ENCODE measurements at regions of chr1 and their contacts with region 1.

Region 1: GRCh38 chr1:46547481-46548383 is 3.7 kb downstream of the KNCN start:
- DNase-seq: no peak

Region 2: GRCh38 chr1:45569962-45570581 is 977.7 kb before region 1 on chr1:
- intact Hi-C with region 1: no loop called
- DNase-seq: peak; percentile 81

Region 3: GRCh38 chr1:46724991-46725735 is 177.4 kb after region 1 on chr1:
- intact Hi-C with region 1: loop called (anchors 5 kb)
- DNase-seq: no peak